Naive thymus-derived CD4-positive, alpha-beta T cell (primary cell): ENCODE measurements at regions of chr10 and their contacts with region 1.

Region 1: DNA sequence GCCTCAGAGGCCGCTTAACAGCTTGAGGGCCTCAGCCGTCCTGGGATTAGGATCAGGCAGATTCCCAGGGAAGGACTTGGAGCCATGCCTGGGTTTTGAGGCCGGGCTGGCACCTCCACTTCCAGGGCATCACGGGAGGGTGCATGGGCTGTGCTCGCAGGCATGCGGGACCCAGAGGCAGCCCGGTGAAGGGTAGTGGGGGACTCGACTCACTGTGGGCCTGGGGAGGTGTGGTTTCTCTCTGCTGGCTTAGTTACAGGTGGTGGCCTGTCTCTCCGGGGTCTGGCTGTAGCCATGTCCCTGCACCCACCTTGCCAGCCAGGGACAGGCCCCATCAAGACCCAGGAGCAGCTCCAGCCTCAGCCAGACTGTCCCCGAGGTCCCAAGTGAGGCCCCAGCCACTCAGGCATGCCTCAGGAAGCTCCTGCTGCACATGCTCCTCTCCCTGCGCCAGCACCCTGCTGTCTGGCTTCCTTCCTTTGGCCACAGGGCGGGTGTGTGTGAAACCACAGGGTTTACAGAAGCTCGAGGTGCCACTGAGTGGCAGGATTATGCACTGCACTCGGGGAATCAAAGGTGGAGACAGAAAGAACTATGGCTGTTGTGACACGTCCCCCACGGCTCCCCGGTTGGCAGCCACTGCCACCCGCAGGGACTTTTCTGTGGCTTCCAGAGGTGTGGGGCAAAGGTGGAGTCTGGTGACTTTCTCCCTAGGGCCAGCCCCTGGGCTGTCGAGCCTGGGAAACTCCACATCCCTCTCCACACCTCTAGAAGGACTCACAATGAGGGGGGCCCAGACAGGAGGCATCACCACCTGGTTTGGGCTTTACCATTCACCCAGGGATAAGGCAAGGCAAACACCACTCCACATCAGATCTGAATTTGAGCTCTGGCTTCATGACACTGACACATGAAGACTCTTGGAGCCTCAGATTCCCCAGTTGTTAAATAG is 19.7 kb downstream of the GOLGA7B start:
- DNase-seq: peak; percentile 56 to 85 (median 78)
- ATAC-seq: peak; percentile 97
- H3K4me3 ChIP-seq: no peak overlapping the region
- H3K4me3 Mint-ChIP-seq: peak overlapping the region in 9 of 10 donors; percentile 6 to 59 (median 37)
- H3K27ac ChIP-seq: peak overlapping the region; percentile 41
- H3K27ac Mint-ChIP-seq: peak overlapping the region; percentile 38 to 85 (median 68)
- H3K4me1 ChIP-seq: peaks cover 8 to 12% of the 10 kb centered on the region in 2 donors
- H3K4me1 Mint-ChIP-seq: peaks cover 9 to 16% (median 13%) of the 10 kb centered on the region in 7 donors
- H3K27me3 ChIP-seq: no peaks in the 10 kb centered on the region
- H3K27me3 Mint-ChIP-seq: peaks cover 0 to 24% (median 0%) of the 10 kb centered on the region in 5 donors

Region 2: DNA sequence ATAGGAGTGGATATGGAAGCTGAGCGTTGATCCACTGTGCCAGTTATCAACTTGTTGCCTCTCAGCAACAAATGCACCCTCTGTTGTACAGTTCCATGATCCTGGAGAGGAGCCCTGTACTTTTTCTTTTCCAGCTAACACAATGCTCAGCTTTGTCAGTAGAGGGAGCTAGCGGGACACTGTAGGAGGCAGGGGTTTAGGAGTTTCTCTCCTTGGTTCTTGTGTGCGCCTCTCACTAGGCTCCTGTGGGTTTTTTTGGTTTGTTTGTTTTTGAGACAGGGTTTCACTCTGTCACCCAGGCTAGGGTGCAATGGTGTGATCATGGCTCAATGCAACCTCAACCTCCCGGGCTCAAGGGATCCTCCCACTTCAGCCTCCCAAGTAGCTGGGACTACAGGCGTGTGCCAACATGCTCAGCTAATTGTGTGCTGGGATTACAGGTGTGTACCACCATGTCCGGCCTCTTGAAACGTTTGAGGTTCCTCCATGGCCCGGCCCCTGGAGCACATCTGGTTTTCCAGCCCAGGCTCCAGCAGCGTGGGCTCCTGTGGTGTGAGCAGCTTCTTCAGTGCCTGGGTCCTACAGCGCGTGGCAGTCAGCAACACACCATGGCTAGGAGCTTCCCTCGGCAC is 167.8 kb before region 1 on chr10:
- CTCF ChIA-PET with region 1: interaction called, 4 read pairs
- POLR2A ChIA-PET with region 1: no interaction called
- intact Hi-C with region 1: loop called (anchors 1 kb)
- DNase-seq: peak in 8 of 9 donors; percentile 35 to 66 (median 56)
- ATAC-seq: peak; percentile 97
- H3K4me3 ChIP-seq: no peak overlapping the region
- H3K4me3 Mint-ChIP-seq: no peak overlapping the region
- H3K27ac ChIP-seq: no peak overlapping the region
- H3K27ac Mint-ChIP-seq: no peak overlapping the region
- H3K4me1 ChIP-seq: no peaks in the 10 kb centered on the region
- H3K4me1 Mint-ChIP-seq: peaks cover 0 to 6% (median 0%) of the 10 kb centered on the region in 7 donors
- H3K27me3 ChIP-seq: no peaks in the 10 kb centered on the region
- H3K27me3 Mint-ChIP-seq: peaks cover 0 to 19% (median 6%) of the 10 kb centered on the region in 5 donors

Region 3: GRCh38 chr10:97759158-97759887 is 110.0 kb before region 1 on chr10:
- CTCF ChIA-PET with region 1: interaction called, 33 read pairs
- POLR2A ChIA-PET with region 1: interaction called, 3 read pairs
- intact Hi-C with region 1: loop called (anchors 1 kb)
- DNase-seq: peak in 7 of 9 donors; percentile 23 to 57 (median 38)
- ATAC-seq: peak; percentile 74
- H3K4me3 ChIP-seq: no peak overlapping the region
- H3K4me3 Mint-ChIP-seq: no peak overlapping the region
- H3K27ac ChIP-seq: no peak overlapping the region
- H3K27ac Mint-ChIP-seq: peak overlapping the region in 2 of 9 donors; percentile 21 to 30
- H3K4me1 ChIP-seq: no peaks in the 10 kb centered on the region
- H3K4me1 Mint-ChIP-seq: peaks cover 0 to 4% (median 0%) of the 10 kb centered on the region in 7 donors
- H3K27me3 ChIP-seq: no peaks in the 10 kb centered on the region
- H3K27me3 Mint-ChIP-seq: no peaks in the 10 kb centered on the region

Region 4: GRCh38 chr10:97792141-97792721 is 77.1 kb before region 1 on chr10:
- CTCF ChIA-PET with region 1: interaction called, 85 read pairs
- POLR2A ChIA-PET with region 1: interaction called, 7 read pairs
- intact Hi-C with region 1: loop called (anchors 1 kb)
- DNase-seq: peak; percentile 42 to 79 (median 60)
- ATAC-seq: peak; percentile 82
- H3K4me3 ChIP-seq: no peak overlapping the region
- H3K4me3 Mint-ChIP-seq: peak overlapping the region in 2 of 10 donors; percentile 5 to 25
- H3K27ac ChIP-seq: no peak overlapping the region
- H3K27ac Mint-ChIP-seq: peak overlapping the region in 5 of 9 donors; percentile 14 to 69 (median 32)
- H3K4me1 ChIP-seq: peaks cover 23 to 39% of the 10 kb centered on the region in 2 donors
- H3K4me1 Mint-ChIP-seq: peaks cover 23 to 52% (median 35%) of the 10 kb centered on the region in 7 donors
- H3K27me3 ChIP-seq: no peaks in the 10 kb centered on the region
- H3K27me3 Mint-ChIP-seq: peaks cover 0 to 16% (median 0%) of the 10 kb centered on the region in 5 donors

Region 5: DNA sequence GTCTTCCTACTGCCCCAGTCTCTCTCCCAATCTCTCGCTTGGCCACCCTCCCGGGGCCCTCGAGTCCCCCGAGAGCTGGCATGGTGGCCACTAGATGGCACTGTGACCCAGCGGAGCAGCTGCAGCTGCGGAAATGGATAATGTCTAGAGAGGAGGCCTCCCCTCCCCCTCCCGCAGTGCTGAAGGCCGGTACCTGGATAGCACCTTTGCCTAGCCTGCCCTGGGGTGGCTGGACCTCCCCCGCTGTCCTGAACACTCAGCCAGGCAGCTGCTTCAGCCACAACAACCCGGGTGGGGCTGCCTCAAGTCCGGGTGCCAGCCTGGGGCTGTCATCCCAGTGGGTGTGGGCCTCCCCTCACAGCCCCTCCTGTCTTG is 45.5 kb after region 1 on chr10:
- CTCF ChIA-PET with region 1: no interaction called
- POLR2A ChIA-PET with region 1: no interaction called
- intact Hi-C with region 1: no loop called
- DNase-seq: peak; percentile 40 to 74 (median 61)
- ATAC-seq: peak; percentile 81
- H3K4me3 ChIP-seq: no peak overlapping the region
- H3K4me3 Mint-ChIP-seq: peak overlapping the region in 2 of 10 donors; percentile 19 to 62
- H3K27ac ChIP-seq: no peak overlapping the region
- H3K27ac Mint-ChIP-seq: no peak overlapping the region
- H3K4me1 ChIP-seq: peaks cover 2 to 5% of the 10 kb centered on the region in 2 donors
- H3K4me1 Mint-ChIP-seq: peaks cover 0 to 15% (median 7%) of the 10 kb centered on the region in 7 donors
- H3K27me3 ChIP-seq: no peaks in the 10 kb centered on the region
- H3K27me3 Mint-ChIP-seq: peaks cover 0 to 23% (median 5%) of the 10 kb centered on the region in 5 donors